Testis (tissue), 5 donors: ENCODE measurements at regions of chr10 and their contacts with region 1.

Region 1: GRCh38 chr10:75235375-75236177 is at the start of gene COMTD1:
- DNase-seq: peak; percentile 96
- H3K4me3 ChIP-seq: peak within 1 kb of the TSS; percentile 63 to 77
- H3K27ac ChIP-seq: peak within 1 kb of the TSS; percentile 31 to 85
- H3K4me1 ChIP-seq: peaks cover 4% of the 10 kb centered on the region
- H3K27me3 ChIP-seq: no peaks in the 10 kb centered on the region
- CTCF ChIP-seq: peak; percentile 100
- POLR2A ChIP-seq: no peak
- total RNA-seq, gene COMTD1: 18.8 to 22.8 TPM

Region 2: DNA sequence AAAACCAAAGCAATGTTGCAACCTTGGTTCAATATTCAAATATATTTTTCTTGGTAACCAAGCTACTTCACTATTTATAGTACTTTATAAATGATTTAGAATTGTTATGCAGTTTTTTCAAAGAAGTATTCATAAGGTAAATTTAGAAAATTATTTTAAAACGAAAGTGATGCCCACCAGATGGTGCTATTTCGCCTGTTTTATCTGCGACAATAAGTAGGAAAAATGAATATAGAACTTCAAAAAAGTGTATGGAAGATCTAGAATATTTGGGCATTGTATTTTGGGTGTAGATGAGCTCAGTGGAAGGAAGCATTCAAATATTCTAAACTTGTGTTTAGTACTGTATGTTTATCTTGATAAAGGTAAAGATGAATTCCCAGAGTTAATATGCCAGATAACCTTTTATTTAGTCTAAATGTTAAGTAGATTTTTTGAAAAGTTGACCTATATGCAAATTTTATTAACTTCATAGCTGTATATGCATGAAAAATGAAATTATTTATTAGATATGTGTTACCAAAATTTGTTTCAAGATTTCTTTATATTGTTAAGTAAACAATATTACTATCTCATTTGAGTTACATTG is 991.4 kb before region 1 on chr10:
- intact Hi-C with region 1: loop called (anchors 10 kb)
- DNase-seq: peak; percentile 49
- H3K4me3 ChIP-seq: no peak overlapping the region
- H3K27ac ChIP-seq: no peak overlapping the region
- H3K4me1 ChIP-seq: no peaks in the 10 kb centered on the region
- H3K27me3 ChIP-seq: no peaks in the 10 kb centered on the region
- CTCF ChIP-seq: peak; percentile 36 to 62 (median 58)
- POLR2A ChIP-seq: no peak

Region 3: GRCh38 chr10:74923556-74923955 is 312.0 kb before region 1 on chr10:
- intact Hi-C with region 1: no loop called
- DNase-seq: no peak
- H3K4me3 ChIP-seq: no peak overlapping the region
- H3K27ac ChIP-seq: peak overlapping the region; percentile 67 to 72
- H3K4me1 ChIP-seq: peaks cover 63% of the 10 kb centered on the region
- H3K27me3 ChIP-seq: no peaks in the 10 kb centered on the region
- CTCF ChIP-seq: no peak
- POLR2A ChIP-seq: no peak

Region 4: GRCh38 chr10:75099952-75100763 is 135.4 kb before region 1 on chr10:
- intact Hi-C with region 1: loop called (anchors 10 kb)
- DNase-seq: peak; percentile 88
- H3K4me3 ChIP-seq: no peak overlapping the region
- H3K27ac ChIP-seq: peak overlapping the region; percentile 36 to 70
- H3K4me1 ChIP-seq: peaks cover 11% of the 10 kb centered on the region
- H3K27me3 ChIP-seq: no peaks in the 10 kb centered on the region
- CTCF ChIP-seq: peak; percentile 97 to 98 (median 98)
- POLR2A ChIP-seq: no peak